MCF 10A (cell line): ENCODE measurements at regions of chr4 and their contacts with region 1.

Region 1: GRCh38 chr4:48093949-48094550 is 40.0 kb downstream of the TXK start:
- DNase-seq: peak; percentile 45
- H3K4me3 Mint-ChIP-seq: no peak overlapping the region
- H3K27ac Mint-ChIP-seq: no peak overlapping the region
- H3K4me1 Mint-ChIP-seq: peaks cover 8% of the 10 kb centered on the region
- H3K27me3 Mint-ChIP-seq: no peaks in the 10 kb centered on the region
- CTCF ChIP-seq: no peak

Region 2: DNA sequence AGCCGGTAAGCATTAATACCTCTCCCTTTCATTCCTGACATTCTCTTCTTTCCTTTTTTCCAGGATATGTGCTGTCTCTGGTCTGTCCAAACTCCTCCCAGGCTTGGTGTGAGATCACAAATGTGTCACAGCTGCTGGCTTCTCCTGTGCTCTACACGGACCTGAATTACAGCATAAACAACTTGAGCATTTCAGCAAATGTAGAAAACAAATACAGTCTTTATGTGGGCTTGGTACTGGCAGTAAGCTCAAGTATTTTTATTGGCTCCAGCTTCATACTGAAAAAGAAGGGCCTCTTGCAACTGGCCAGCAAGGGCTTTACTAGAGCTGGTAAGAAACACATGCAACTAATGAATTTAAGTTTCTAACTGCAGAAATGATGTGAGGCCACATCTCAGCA is 69.0 kb before region 1 on chr4:
- CTCF ChIA-PET with region 1: no interaction called
- POLR2A ChIA-PET with region 1: no interaction called
- intact Hi-C with region 1: no loop called
- DNase-seq: no peak
- H3K4me3 Mint-ChIP-seq: no peak overlapping the region
- H3K27ac Mint-ChIP-seq: no peak overlapping the region
- H3K4me1 Mint-ChIP-seq: no peaks in the 10 kb centered on the region
- H3K27me3 Mint-ChIP-seq: no peaks in the 10 kb centered on the region
- CTCF ChIP-seq: no peak

Region 3: GRCh38 chr4:48074657-48075056 is 19.4 kb before region 1 on chr4:
- CTCF ChIA-PET with region 1: interaction called, 12 read pairs
- POLR2A ChIA-PET with region 1: no interaction called
- intact Hi-C with region 1: no loop called
- DNase-seq: no peak
- H3K4me3 Mint-ChIP-seq: no peak overlapping the region
- H3K27ac Mint-ChIP-seq: no peak overlapping the region
- H3K4me1 Mint-ChIP-seq: no peaks in the 10 kb centered on the region
- H3K27me3 Mint-ChIP-seq: no peaks in the 10 kb centered on the region
- CTCF ChIP-seq: no peak

Region 4: DNA sequence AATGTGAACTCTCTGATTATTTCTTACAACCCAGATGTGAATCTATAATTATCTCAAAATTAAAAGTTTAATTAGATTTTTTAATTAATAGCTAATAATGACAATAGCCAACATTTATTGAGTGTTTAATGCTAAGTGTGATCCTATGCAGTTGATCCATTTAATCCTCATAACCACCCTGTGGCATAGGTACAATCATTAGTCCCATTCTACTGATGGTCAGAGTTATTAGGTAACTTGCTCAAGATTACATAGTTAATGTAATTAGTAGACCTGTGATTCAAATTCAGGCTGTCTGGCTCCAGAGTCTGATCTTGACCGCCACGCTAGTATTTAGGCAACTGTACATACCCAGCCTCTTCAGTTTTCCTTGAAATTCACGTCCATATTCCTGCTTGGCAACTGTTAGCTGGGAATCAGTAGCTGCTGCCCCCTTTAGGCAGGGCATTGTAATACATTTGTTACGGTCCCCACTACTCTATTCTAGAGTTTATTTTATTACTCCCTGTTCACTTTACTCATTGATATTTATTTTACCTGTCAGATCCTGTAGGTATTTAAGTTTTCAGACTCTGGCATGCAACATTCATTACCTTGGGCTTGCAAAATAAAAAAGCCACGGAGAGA is 196.2 kb after region 1 on chr4:
- CTCF ChIA-PET with region 1: no interaction called
- POLR2A ChIA-PET with region 1: no interaction called
- intact Hi-C with region 1: no loop called
- DNase-seq: peak; percentile 55
- H3K4me3 Mint-ChIP-seq: no peak overlapping the region
- H3K27ac Mint-ChIP-seq: no peak overlapping the region
- H3K4me1 Mint-ChIP-seq: no peaks in the 10 kb centered on the region
- H3K27me3 Mint-ChIP-seq: no peaks in the 10 kb centered on the region
- CTCF ChIP-seq: peak; percentile 67

Region 5: DNA sequence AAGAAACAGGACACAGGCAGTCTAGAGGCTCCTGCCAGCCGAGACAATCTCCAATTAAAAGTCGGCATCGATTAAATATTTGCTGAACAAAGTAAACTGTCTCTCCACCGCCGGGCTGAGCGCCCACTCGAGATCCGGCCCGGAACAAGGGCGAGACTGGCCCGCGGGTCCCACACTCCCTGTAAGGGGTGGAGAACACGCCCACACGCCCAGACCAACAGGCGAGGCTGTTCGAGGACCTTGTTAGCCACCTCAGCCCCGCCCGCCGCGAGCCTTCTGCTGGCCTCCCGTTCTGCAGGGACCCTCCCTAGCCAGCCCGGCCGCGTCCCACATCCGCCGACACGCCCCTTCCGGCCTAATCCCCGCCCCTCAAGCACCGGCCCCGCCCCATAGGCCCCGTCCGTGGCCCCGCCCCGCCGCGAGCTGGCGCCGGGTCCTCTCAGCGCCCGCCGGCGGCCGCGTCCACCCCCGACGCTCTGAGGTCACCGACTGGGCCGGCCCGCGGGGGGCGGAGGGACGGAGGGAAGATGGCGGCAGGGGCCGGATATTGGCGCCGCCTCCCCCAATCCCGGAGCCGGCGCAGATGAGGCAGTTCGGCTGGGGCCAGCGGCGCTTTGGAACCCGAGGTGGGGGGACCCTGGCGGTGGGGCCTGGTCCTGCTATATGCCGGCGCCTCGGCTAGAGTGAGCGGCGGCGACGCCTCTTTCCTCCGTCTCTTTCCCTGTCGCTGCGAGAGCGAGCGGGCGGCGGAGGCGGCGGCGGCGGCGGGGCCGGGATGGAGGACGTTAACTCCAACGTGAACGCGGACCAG is 247.1 kb after region 1 on chr4 and contains the start of gene SLAIN2:
- CTCF ChIA-PET with region 1: no interaction called
- POLR2A ChIA-PET with region 1: no interaction called
- intact Hi-C with region 1: no loop called
- DNase-seq: peak; percentile 96
- H3K4me3 Mint-ChIP-seq: peak within 1 kb of the TSS; percentile 98
- H3K27ac Mint-ChIP-seq: peak within 1 kb of the TSS; percentile 97
- H3K4me1 Mint-ChIP-seq: peaks cover 53% of the 10 kb centered on the region
- H3K27me3 Mint-ChIP-seq: no peaks in the 10 kb centered on the region
- CTCF ChIP-seq: no peak
- total RNA-seq, gene SLAIN2: 74.0 and 81.6 TPM in 2 replicates